Activated naive CD4-positive, alpha-beta T cell treated with anti-CD3 and anti-CD28 coated beads, Interleukin-2, amount 10 ng/mL, durations not matched to agents 7 days and 5 days (primary cell): ENCODE measurements at regions of chr11 and their contacts with region 1.

Region 1: GRCh38 chr11:93234602-93235207 is 36.9 kb upstream of the SLC36A4 start:
- DNase-seq: peak; percentile 79
- H3K4me3 Mint-ChIP-seq: no peak overlapping the region
- H3K27ac Mint-ChIP-seq: no peak overlapping the region
- H3K4me1 Mint-ChIP-seq: no peaks in the 10 kb centered on the region
- H3K27me3 Mint-ChIP-seq: peaks cover 12% of the 10 kb centered on the region

Region 2: DNA sequence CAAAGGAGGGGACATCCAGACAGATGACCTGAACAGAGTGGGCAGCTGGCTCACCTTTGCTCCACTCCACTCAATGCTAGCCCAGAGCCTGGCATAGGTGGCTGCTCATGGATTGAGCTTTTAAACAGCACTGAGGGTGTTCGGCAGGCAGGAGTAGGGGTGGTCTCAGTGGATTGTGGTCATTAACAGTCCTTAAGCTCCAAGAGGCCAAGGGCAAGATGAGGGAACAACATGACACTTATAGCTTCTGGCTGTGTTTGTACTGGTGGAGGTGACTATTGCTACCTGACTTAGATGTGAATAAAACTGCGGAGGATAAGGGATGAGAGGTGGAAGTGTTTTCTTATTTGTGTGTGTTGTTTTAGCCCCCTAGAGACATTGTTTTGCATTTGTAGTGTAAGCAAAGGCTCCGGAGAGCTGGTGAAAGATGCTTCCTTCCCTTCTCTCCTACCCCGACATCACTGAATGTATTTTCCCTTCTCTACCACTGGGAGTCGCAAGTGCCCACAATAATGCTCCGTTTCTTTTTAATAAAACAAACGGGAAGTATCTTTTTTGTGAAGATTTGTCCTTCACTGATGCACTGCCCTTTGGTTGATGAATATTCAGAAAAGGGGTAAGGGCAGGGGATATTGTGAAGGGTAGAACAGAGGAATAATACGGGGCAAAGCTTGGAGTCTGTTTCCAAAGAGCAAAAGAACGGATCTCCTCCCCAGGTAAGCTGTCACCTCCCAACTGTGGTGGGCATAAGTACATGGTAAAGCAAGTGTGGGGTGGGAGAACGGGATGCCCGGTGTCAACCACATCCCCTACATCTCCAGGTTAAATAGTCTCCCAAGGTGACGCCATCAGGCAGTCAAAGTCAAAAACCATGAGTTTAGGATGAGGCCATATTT is 292.8 kb before region 1 on chr11:
- CTCF ChIA-PET with region 1: interaction called, 17 read pairs
- DNase-seq: no peak
- H3K4me3 Mint-ChIP-seq: no peak overlapping the region
- H3K27ac Mint-ChIP-seq: no peak overlapping the region
- H3K4me1 Mint-ChIP-seq: no peaks in the 10 kb centered on the region
- H3K27me3 Mint-ChIP-seq: no peaks in the 10 kb centered on the region

Region 3: DNA sequence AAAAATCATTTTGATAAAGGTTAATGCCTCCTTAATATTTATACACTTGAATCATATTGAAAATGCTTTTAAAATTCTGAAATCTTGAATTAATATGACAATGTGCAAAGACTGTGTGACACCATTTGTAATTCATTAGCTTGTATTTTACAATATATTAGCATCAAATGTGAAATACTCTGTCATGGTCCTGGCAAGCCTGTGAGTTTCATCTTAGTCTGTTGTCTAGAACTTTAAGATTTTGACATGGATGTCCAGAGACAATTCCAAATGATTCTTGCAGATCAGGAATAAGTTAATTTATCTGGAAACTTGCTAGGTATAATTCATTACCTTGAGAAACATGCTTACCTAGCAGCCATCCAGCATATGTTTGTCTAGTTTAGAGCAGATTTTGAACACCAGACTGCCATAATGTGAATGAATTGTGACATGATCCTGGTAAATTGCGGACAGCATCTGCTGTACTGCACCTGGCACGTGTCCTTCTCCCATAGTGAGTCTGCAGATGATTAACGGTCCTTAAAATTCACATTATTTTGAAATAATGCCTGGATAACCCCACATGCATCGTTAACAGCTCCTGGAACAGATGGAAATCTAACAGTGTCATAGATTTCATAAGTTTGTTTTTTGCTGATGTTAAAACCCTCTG is 61.3 kb after region 1 on chr11:
- CTCF ChIA-PET with region 1: no interaction called
- DNase-seq: no peak
- H3K4me3 Mint-ChIP-seq: no peak overlapping the region
- H3K27ac Mint-ChIP-seq: no peak overlapping the region
- H3K4me1 Mint-ChIP-seq: no peaks in the 10 kb centered on the region
- H3K27me3 Mint-ChIP-seq: no peaks in the 10 kb centered on the region

Region 4: GRCh38 chr11:93614173-93614722 is 379.5 kb after region 1 on chr11:
- CTCF ChIA-PET with region 1: interaction called, 13 read pairs
- DNase-seq: peak; percentile 49
- H3K4me3 Mint-ChIP-seq: no peak overlapping the region
- H3K27ac Mint-ChIP-seq: no peak overlapping the region
- H3K4me1 Mint-ChIP-seq: peaks cover 6% of the 10 kb centered on the region
- H3K27me3 Mint-ChIP-seq: peaks cover 6% of the 10 kb centered on the region

Region 5: GRCh38 chr11:93652161-93652597 is 417.5 kb after region 1 on chr11:
- CTCF ChIA-PET with region 1: interaction called, 62 read pairs
- DNase-seq: peak; percentile 30
- H3K4me3 Mint-ChIP-seq: no peak overlapping the region
- H3K27ac Mint-ChIP-seq: no peak overlapping the region
- H3K4me1 Mint-ChIP-seq: peaks cover 9% of the 10 kb centered on the region
- H3K27me3 Mint-ChIP-seq: peaks cover 3% of the 10 kb centered on the region

Region 6: GRCh38 chr11:93659841-93660240 is 425.1 kb after region 1 on chr11:
- CTCF ChIA-PET with region 1: interaction called, 62 read pairs
- DNase-seq: no peak
- H3K4me3 Mint-ChIP-seq: no peak overlapping the region
- H3K27ac Mint-ChIP-seq: no peak overlapping the region
- H3K4me1 Mint-ChIP-seq: peaks cover 38% of the 10 kb centered on the region
- H3K27me3 Mint-ChIP-seq: peaks cover 7% of the 10 kb centered on the region